Gastrocnemius medialis (tissue), 4 donors: ENCODE measurements at regions of chr1 and their contacts with region 1.

Region 1: DNA sequence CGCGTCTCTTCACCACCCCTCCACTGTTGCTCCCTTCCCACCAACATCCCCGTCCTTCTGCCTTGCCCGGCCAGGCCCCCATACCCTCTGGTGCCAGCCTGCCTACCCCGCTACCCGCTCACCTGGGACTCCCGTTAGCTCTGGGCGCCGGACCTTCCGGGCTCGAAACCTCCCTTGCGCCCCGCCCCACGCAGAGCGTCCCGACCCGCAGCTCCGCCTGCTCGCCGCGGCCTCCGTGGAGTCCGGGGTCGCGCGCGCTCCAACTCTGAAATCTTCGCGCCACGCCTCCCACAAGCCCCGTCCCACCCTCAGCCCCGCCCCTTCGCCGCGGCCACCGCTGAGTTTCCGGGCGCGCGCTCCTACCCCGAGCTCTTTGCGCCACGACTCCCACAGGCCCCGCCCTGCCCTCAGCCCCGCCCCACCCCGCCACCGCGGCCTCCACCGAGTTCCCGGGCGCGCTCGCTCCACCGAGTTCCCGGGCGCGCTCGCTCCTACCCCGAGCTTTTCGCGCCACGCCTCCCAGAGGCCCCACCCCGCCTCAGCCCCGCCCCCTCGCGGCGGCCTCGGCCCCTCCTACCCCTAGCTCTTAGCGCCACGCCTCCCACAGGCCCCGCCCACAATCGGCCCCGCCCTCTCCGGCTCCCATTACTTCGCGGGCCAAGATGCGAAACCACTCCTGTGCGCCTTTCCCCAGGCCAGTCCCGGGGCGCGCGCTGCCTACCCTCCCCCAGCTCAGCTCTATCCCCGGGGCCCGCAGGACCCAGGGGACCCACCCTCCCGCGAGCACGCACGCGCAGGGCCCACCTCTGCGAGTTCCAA is at the start of gene IFT25:
- DNase-seq: peak; percentile 91 to 95
- ATAC-seq: peak; percentile 85 to 86
- H3K4me3 ChIP-seq: peak within 1 kb of the TSS; percentile 80 to 98 (median 92)
- H3K27ac ChIP-seq: peak within 1 kb of the TSS; percentile 86 to 97 (median 94)
- H3K4me1 ChIP-seq: peaks cover 8 to 19% of the 10 kb centered on the region in 2 donors
- H3K27me3 ChIP-seq: no peaks in the 10 kb centered on the region
- CTCF ChIP-seq: no peak
- POLR2A ChIP-seq: peak; percentile 37 to 64
- total RNA-seq, gene IFT25: 2.4 to 9.1 (median 2.9) TPM

Region 2: DNA sequence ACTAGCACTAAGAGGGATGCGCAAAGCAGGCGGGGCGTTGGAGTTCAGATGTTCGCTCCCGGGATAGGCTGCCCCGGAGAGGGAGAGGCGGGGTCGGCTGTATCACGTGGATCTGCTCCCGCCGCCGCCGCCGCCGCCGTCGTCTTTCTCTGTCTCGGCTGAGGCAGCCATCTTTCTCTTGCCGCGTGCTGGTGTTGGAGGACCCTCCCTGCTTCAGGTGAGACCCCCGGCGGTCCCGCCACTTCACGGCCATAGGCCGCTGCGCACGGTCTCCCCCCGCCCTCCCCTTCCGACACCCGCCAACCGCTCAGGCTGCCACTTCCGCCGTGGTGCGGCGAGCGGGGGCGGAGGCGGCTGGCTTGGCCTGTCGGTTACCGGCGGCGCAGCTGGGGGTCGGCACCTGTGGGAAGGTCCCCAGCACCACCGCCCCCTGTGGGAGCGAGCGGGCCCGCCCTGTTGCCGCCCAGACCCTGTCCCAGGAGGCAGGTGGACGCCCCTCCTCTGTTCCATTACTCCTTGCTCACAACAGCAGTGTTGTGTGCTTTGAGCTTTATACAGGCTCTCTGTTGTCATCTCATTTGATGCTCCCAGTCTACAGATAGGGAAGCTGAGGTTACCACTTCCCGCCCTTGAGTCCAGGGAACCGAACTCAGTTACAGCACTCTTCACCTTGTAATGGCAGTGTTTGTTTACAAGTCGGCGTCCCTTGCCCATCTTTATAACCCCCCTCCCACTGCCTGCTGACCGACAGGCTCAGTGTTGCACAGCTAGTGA is 1889.3 kb before region 1 on chr1 and contains the start of gene BTF3L4:
- in situ Hi-C with region 1: no loop called
- intact Hi-C with region 1: loop called (anchors 5 kb)
- DNase-seq: peak; percentile 96 to 97
- ATAC-seq: peak; percentile 89 to 90
- H3K4me3 ChIP-seq: peak within 1 kb of the TSS; percentile 75 to 87 (median 86)
- H3K27ac ChIP-seq: peak within 1 kb of the TSS; percentile 92 to 98 (median 96)
- H3K4me1 ChIP-seq: peaks cover 38 to 39% of the 10 kb centered on the region in 2 donors
- H3K27me3 ChIP-seq: no peaks in the 10 kb centered on the region
- CTCF ChIP-seq: no peak
- POLR2A ChIP-seq: peak; percentile 85 to 86
- total RNA-seq, gene BTF3L4: 68.4 to 92.9 (median 72.4) TPM

Region 3: GRCh38 chr1:53837924-53838652 is 107.6 kb before region 1 on chr1 and contains the start of gene NDC1:
- in situ Hi-C with region 1: no loop called
- intact Hi-C with region 1: loop called (anchors 1 kb)
- DNase-seq: peak; percentile 86 to 89
- ATAC-seq: peak; percentile 99 to 100
- H3K4me3 ChIP-seq: peak within 1 kb of the TSS; percentile 76 to 89 (median 86)
- H3K27ac ChIP-seq: peak within 1 kb of the TSS; percentile 93 to 99 (median 96)
- H3K4me1 ChIP-seq: peaks cover 13 to 16% of the 10 kb centered on the region in 2 donors
- H3K27me3 ChIP-seq: no peaks in the 10 kb centered on the region
- CTCF ChIP-seq: peak in 4 of 5 experiments; percentile 22 to 42 (median 33)
- POLR2A ChIP-seq: peak; percentile 53 to 70
- total RNA-seq, gene NDC1: 7.6 to 27.0 (median 9.5) TPM

Region 4: GRCh38 chr1:53878492-53879105 is 67.0 kb before region 1 on chr1:
- in situ Hi-C with region 1: loop called in 3 of 4 experiments (anchors 10 kb)
- intact Hi-C with region 1: loop called (anchors 1 kb)
- DNase-seq: no peak
- ATAC-seq: no peak
- H3K4me3 ChIP-seq: no peak overlapping the region
- H3K27ac ChIP-seq: no peak overlapping the region
- H3K4me1 ChIP-seq: no peaks in the 10 kb centered on the region
- H3K27me3 ChIP-seq: no peaks in the 10 kb centered on the region
- CTCF ChIP-seq: peak in 4 of 5 experiments; percentile 23 to 56 (median 39)
- POLR2A ChIP-seq: no peak

Region 5: GRCh38 chr1:54052934-54053744 is 107.5 kb after region 1 on chr1 and contains the starts of genes TCEANC2 and TMEM59:
- in situ Hi-C with region 1: no loop called
- intact Hi-C with region 1: loop called (anchors 2 kb)
- DNase-seq: peak; percentile 97 to 98
- ATAC-seq: peak; percentile 93 to 94
- H3K4me3 ChIP-seq: peak within 1 kb of the TSS; percentile 82 to 99 (median 96)
- H3K27ac ChIP-seq: peak within 1 kb of the TSS; percentile 98 to 99 (median 98)
- H3K4me1 ChIP-seq: peaks cover 49% of the 10 kb centered on the region in 2 donors
- H3K27me3 ChIP-seq: no peaks in the 10 kb centered on the region
- CTCF ChIP-seq: peak in 1 of 5 experiments; percentile 10
- POLR2A ChIP-seq: peak; percentile 80 to 85
- total RNA-seq, gene TCEANC2: 2.6 to 9.5 (median 7.0) TPM
- total RNA-seq, gene TMEM59: 156 to 248 (median 224) TPM

Region 6: GRCh38 chr1:54715493-54716298 is 770.1 kb after region 1 on chr1 and contains the start of gene TTC4:
- in situ Hi-C with region 1: no loop called
- intact Hi-C with region 1: loop called (anchors 5 kb)
- DNase-seq: peak; percentile 59 to 72
- ATAC-seq: peak; percentile 92 to 95
- H3K4me3 ChIP-seq: peak within 1 kb of the TSS; percentile 91 to 98 (median 97)
- H3K27ac ChIP-seq: peak within 1 kb of the TSS; percentile 88 to 94 (median 90)
- H3K4me1 ChIP-seq: peaks cover 12 to 15% of the 10 kb centered on the region in 2 donors
- H3K27me3 ChIP-seq: no peaks in the 10 kb centered on the region
- CTCF ChIP-seq: no peak
- POLR2A ChIP-seq: peak; percentile 77 to 79
- total RNA-seq, gene TTC4: 26.7 to 44.3 (median 31.4) TPM